Sigmoid colon (tissue), 7 donors: ENCODE measurements at regions of chr4 and their contacts with region 1.

Region 1: DNA sequence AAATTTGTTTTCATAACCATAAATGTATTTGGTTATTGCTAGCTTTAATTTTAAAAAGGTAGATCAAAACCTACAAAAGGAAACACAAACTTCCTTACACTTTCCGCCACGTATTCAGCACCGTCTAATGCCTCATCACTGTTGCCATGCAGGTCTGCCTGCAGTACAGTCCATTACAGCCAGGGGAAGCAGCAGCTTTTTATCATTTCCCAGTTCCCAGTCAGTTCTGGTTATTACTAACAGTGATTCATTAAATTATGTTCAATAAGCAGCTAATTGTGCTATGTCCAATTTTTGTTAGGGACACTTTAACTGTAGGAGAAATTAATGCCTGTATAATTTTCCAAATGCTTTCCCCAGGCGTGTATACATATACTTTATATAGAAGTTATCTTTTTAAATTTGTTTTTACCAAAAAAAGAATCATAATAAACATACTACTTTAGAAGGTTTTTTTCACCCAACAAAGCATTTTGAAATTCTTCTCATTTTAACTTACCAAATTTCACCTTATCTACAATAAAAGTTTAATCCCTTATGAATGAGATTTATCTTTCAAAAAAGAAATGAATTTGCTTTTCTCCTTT is 93.3 kb downstream of the ANXA3 start:
- DNase-seq: peak; percentile 76
- H3K4me3 ChIP-seq: no peak overlapping the region
- H3K27ac ChIP-seq: peak overlapping the region; percentile 79 to 83 (median 80)
- H3K4me1 ChIP-seq: peaks cover 0 to 23% (median 18%) of the 10 kb centered on the region in 4 donors
- H3K27me3 ChIP-seq: no peaks in the 10 kb centered on the region
- CTCF ChIP-seq: peak; percentile 84 to 99 (median 93)
- EP300 ChIP-seq: no peak
- POLR2A ChIP-seq: no peak

Region 2: GRCh38 chr4:78775303-78776030 is 130.6 kb after region 1 on chr4:
- intact Hi-C with region 1: loop called (anchors 1 kb)
- DNase-seq: peak; percentile 94
- H3K4me3 ChIP-seq: peak overlapping the region; percentile 60 to 93 (median 82)
- H3K27ac ChIP-seq: peak overlapping the region; percentile 95 to 100 (median 97)
- H3K4me1 ChIP-seq: peaks cover 0 to 38% (median 16%) of the 10 kb centered on the region in 4 donors
- H3K27me3 ChIP-seq: no peaks in the 10 kb centered on the region
- CTCF ChIP-seq: no peak
- EP300 ChIP-seq: peak in 1 of 4 donors; percentile 4
- POLR2A ChIP-seq: peak; percentile 56 to 57